ENCODE measurements at regions of chr7 and their contacts with region 1.

Region 1: GRCh38 chr7:151244196-151244840 is 4.2 kb downstream of the SMARCD3 start:
- DNase-seq: peak; percentile 81
- ATAC-seq: peak; percentile 23
- H3K4me3 Mint-ChIP-seq: peak overlapping the region; percentile 65
- H3K27ac Mint-ChIP-seq: peak overlapping the region; percentile 86
- H3K4me1 Mint-ChIP-seq: peaks cover 39% of the 10 kb centered on the region
- H3K27me3 Mint-ChIP-seq: peaks cover 32% of the 10 kb centered on the region

Region 2: DNA sequence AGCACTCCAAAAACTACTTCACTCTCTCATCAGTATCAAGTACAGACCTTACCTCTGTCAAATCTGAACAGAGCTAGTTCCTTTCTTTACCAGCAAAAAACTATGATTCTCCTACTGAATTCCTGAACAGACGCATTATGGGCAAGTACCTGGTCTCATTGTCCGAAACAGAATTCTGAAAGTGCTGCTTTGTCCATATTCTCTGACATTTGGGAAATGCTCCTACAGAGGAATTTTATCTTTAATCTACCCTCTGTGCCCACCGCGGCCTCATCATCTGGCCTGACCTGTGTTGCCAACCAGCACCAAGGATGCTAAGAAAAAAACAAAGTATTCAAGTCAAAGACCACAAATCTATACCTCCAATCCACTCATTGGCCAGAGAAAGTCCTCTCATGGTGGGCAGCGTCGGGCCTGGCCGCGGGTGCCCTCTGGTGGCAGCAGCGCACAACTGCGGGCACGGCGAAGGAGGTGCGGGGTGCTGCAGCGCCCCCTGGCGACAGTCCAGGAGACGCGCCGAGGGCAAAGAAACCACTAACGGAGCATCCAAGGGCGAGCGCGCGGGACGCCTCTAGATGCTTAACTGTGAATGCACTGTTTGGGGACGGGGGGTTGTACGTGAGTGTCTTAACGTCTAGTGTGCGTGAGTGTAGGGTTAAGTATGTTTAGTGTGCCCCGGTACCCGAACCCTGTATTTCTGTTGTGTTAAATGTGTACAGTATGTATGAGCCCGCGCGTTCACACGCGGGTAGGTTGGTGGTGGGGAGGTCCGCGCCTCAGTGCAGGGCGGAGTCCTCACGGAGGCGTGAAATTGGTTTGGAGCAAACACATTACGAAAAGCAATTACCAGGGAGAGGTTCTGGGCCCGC is 71.8 kb before region 1 on chr7:
- CTCF ChIA-PET with region 1: interaction called, 18 read pairs
- POLR2A ChIA-PET with region 1: no interaction called
- DNase-seq: peak; percentile 83
- ATAC-seq: peak; percentile 74
- H3K4me3 Mint-ChIP-seq: no peak overlapping the region
- H3K27ac Mint-ChIP-seq: no peak overlapping the region
- H3K4me1 Mint-ChIP-seq: peaks cover 13% of the 10 kb centered on the region
- H3K27me3 Mint-ChIP-seq: peaks cover 43% of the 10 kb centered on the region

Region 3: GRCh38 chr7:151226875-151227782 is 17.2 kb before region 1 on chr7 and contains the start of gene ABCF2:
- CTCF ChIA-PET with region 1: interaction called, 59 read pairs
- POLR2A ChIA-PET with region 1: interaction called, 11 read pairs
- DNase-seq: peak; percentile 99
- ATAC-seq: peak; percentile 100
- H3K4me3 Mint-ChIP-seq: peak within 1 kb of the TSS; percentile 99
- H3K27ac Mint-ChIP-seq: peak within 1 kb of the TSS; percentile 97
- H3K4me1 Mint-ChIP-seq: peaks cover 43% of the 10 kb centered on the region
- H3K27me3 Mint-ChIP-seq: no peaks in the 10 kb centered on the region
- total RNA-seq, gene ABCF2: 38.2 to 45.9 TPM

Region 4: DNA sequence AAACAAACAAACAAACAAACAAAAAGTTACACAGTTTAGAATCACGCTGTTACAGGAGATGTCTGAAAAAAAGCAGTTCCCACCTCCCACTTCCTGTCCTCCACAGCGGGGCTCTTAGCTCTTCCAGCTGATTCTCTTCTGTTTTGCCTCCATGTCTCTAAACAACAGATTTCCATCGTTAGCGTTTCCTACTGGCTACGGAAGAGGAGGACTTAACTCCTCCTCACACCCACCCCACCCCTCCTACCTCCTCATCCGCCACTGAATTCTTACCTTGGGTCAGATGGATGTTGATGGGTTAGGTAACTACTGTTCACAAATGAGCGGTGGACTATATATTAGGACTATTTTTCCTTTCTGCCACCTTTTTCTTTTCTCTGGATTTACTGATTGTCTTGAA is 60.5 kb after region 1 on chr7:
- CTCF ChIA-PET with region 1: interaction called, 12 read pairs
- POLR2A ChIA-PET with region 1: no interaction called
- DNase-seq: no peak
- ATAC-seq: no peak
- H3K4me3 Mint-ChIP-seq: peak overlapping the region; percentile 31
- H3K27ac Mint-ChIP-seq: no peak overlapping the region
- H3K4me1 Mint-ChIP-seq: peaks cover 23% of the 10 kb centered on the region
- H3K27me3 Mint-ChIP-seq: peaks cover 30% of the 10 kb centered on the region

Region 5: GRCh38 chr7:151351027-151351426 is 106.7 kb after region 1 on chr7:
- CTCF ChIA-PET with region 1: interaction called, 25 read pairs
- POLR2A ChIA-PET with region 1: no interaction called
- DNase-seq: peak; percentile 63
- ATAC-seq: no peak
- H3K4me3 Mint-ChIP-seq: peak overlapping the region; percentile 51
- H3K27ac Mint-ChIP-seq: peak overlapping the region; percentile 90
- H3K4me1 Mint-ChIP-seq: peaks cover 47% of the 10 kb centered on the region
- H3K27me3 Mint-ChIP-seq: no peaks in the 10 kb centered on the region

Region 6: DNA sequence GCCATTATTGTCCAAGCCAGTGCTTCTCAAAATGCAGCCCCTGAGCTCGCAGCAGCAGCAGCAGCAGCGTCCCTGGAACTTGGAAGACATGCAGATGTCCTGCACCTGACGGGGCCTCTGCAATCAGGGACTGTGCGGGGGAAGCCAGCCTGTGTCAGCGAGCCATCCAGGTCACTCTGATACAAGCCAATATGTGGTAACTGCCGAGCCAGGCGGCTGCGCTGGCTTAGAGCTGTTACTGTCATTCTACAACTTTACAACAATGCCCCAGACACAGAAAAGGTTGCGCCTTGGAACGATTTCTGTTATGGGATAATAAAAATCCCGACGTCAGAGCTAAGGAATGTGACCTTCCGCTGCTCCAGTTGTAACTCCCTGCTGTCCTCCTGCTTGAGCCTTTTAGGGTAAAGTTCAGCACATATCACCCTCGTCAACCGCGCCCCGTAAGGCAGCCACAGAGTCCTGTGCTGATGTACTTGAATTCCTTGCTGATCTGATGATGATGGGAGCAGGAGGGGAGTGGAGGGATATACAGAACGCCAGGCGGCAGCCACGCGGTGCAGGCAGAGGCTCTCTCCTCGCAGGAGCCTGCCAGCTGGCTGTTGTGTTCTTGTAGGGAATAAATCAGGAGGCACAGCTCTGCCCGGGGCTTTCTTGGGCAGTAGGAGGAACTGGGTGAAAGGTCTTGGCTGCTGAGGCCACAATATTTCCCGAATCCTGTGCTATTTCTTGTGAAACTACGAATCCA is 215.6 kb after region 1 on chr7:
- CTCF ChIA-PET with region 1: no interaction called
- POLR2A ChIA-PET with region 1: no interaction called
- DNase-seq: no peak
- ATAC-seq: no peak
- H3K4me3 Mint-ChIP-seq: no peak overlapping the region
- H3K27ac Mint-ChIP-seq: no peak overlapping the region
- H3K4me1 Mint-ChIP-seq: peaks cover 6% of the 10 kb centered on the region
- H3K27me3 Mint-ChIP-seq: peaks cover 12% of the 10 kb centered on the region

Region 7: DNA sequence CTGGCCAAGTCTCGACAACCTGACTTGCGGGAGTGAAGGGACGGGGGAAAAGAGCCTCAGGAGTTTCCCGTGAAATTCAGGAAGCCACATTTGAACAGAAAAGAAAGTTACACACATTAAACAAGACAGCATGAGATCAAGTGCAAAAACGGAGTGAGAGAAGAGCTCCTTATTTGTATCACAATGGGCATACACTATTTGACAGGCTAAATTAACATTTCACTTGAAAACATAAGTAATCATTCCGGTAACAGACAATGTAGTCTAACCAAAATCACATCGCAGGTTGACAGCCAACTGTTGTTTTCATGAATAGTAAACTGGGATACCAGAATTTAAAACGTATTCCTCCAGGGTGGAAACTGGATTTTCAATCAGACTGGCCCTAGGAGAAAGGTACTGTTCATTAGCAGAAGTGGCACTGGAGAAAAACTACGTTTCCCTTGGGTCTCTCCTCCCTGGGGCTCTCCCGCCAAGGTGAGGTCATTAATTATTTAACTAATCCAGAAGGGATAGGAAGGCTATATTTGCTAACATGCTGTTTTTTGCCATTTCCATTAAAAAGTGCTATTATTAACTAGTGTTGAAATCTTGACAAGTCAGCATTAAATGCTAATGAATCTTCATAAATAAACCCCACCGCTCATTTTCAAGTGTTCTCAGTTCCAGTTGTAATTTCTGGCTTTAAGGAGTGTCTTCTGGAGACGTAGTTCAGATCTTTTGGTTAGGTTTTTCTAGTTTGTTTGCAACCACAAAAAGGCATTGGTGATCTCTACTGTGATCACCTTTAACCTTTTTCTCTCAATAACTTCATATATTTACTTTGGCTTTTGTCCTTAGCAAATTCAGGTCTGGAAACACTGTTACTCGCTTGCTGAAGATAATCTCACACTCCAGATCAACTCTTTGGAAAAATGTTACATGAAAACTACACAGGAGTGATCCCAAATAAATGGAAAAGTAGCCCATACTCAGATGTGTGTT is 250.3 kb after region 1 on chr7:
- CTCF ChIA-PET with region 1: no interaction called
- POLR2A ChIA-PET with region 1: no interaction called
- DNase-seq: no peak
- ATAC-seq: no peak
- H3K4me3 Mint-ChIP-seq: no peak overlapping the region
- H3K27ac Mint-ChIP-seq: no peak overlapping the region
- H3K4me1 Mint-ChIP-seq: peaks cover 29% of the 10 kb centered on the region
- H3K27me3 Mint-ChIP-seq: no peaks in the 10 kb centered on the region